Esophagus muscularis mucosa (tissue), 4 donors: ENCODE measurements at regions of chr2 and their contacts with region 1.

Region 1: GRCh38 chr2:47076586-47077441 is 78.3 kb downstream of the STPG4 start:
- DNase-seq: no peak
- H3K4me3 ChIP-seq: no peak overlapping the region
- H3K27ac ChIP-seq: peak overlapping the region; percentile 87 to 91 (median 90)
- H3K4me1 ChIP-seq: peaks cover 61 to 87% (median 81%) of the 10 kb centered on the region in 4 donors
- H3K27me3 ChIP-seq: no peaks in the 10 kb centered on the region
- CTCF ChIP-seq: no peak
- EP300 ChIP-seq: no peak
- POLR2A ChIP-seq: no peak

Region 2: GRCh38 chr2:46989491-46990230 is 87.2 kb before region 1 on chr2:
- intact Hi-C with region 1: loop called (anchors 5 kb)
- DNase-seq: no peak
- H3K4me3 ChIP-seq: peak overlapping the region in 1 of 4 donors; percentile 2
- H3K27ac ChIP-seq: peak overlapping the region; percentile 84 to 90 (median 86)
- H3K4me1 ChIP-seq: peaks cover 52 to 93% (median 76%) of the 10 kb centered on the region in 4 donors
- H3K27me3 ChIP-seq: no peaks in the 10 kb centered on the region
- CTCF ChIP-seq: no peak
- EP300 ChIP-seq: no peak
- POLR2A ChIP-seq: no peak

Region 3: GRCh38 chr2:47272031-47272864 is 195.4 kb after region 1 on chr2:
- intact Hi-C with region 1: loop called (anchors 5 kb)
- DNase-seq: no peak
- H3K4me3 ChIP-seq: peak overlapping the region; percentile 40 to 50 (median 44)
- H3K27ac ChIP-seq: peak overlapping the region; percentile 59 to 83 (median 80)
- H3K4me1 ChIP-seq: peaks cover 34 to 55% (median 54%) of the 10 kb centered on the region in 4 donors
- H3K27me3 ChIP-seq: no peaks in the 10 kb centered on the region
- CTCF ChIP-seq: peak in 2 of 3 experiments; percentile 94 to 98
- EP300 ChIP-seq: no peak
- POLR2A ChIP-seq: no peak